Naive thymus-derived CD4-positive, alpha-beta T cell (primary cell): ENCODE measurements at regions of chr14 and their contacts with region 1.

Region 1: DNA sequence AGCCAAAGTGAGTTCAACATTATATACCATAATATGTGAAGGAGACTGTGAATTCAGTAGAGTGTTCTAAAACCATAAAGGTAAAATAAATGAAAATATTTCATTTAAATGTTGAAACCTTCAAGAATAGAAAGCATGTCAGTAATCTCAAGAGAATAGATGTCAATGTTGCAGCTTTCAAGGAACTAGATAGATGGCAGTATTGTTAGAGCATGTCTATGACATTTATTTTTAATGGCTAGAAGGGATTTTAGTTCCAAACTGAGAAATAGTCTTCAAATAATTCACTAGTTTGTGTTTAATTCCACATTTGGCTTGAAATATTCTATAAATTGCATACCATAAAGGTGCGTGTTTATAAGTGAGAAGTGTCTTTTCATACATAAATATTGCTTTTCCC is 326.5 kb downstream of the FLRT2 start:
- DNase-seq: no peak
- ATAC-seq: no peak
- H3K4me3 ChIP-seq: no peak overlapping the region
- H3K4me3 Mint-ChIP-seq: no peak overlapping the region
- H3K27ac ChIP-seq: no peak overlapping the region
- H3K27ac Mint-ChIP-seq: no peak overlapping the region
- H3K4me1 ChIP-seq: no peaks in the 10 kb centered on the region
- H3K4me1 Mint-ChIP-seq: peaks cover 0 to 5% (median 0%) of the 10 kb centered on the region in 7 donors
- H3K27me3 ChIP-seq: no peaks in the 10 kb centered on the region
- H3K27me3 Mint-ChIP-seq: peaks cover 0 to 13% (median 8%) of the 10 kb centered on the region in 5 donors

Region 2: DNA sequence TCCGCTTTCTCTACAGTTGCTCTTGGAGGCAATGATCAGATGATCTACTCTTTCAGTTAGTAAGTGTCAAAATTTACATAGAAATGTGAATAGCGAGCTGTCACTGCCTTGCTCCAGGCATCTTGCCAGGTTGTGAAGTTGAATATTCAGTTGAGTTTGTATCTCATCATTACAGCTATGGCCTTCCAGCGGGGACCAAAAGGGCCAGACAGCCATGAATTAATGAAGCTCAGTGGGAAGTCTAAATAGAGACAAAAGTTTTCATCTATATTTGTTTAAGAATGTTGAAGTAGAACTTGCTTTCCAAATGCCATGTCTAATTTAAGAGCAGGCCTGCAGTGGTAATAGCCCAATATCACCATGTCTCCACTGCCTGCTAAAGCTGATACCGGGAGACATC is 61.3 kb after region 1 on chr14:
- CTCF ChIA-PET with region 1: no interaction called
- POLR2A ChIA-PET with region 1: no interaction called
- intact Hi-C with region 1: no loop called
- DNase-seq: no peak
- ATAC-seq: no peak
- H3K4me3 ChIP-seq: no peak overlapping the region
- H3K4me3 Mint-ChIP-seq: no peak overlapping the region
- H3K27ac ChIP-seq: no peak overlapping the region
- H3K27ac Mint-ChIP-seq: no peak overlapping the region
- H3K4me1 ChIP-seq: no peaks in the 10 kb centered on the region
- H3K4me1 Mint-ChIP-seq: peaks cover 0 to 2% (median 0%) of the 10 kb centered on the region in 7 donors
- H3K27me3 ChIP-seq: no peaks in the 10 kb centered on the region
- H3K27me3 Mint-ChIP-seq: peaks cover 0 to 12% (median 4%) of the 10 kb centered on the region in 5 donors

Region 3: GRCh38 chr14:85974602-85975001 is 118.2 kb after region 1 on chr14:
- CTCF ChIA-PET with region 1: no interaction called
- POLR2A ChIA-PET with region 1: no interaction called
- intact Hi-C with region 1: no loop called
- DNase-seq: no peak
- ATAC-seq: no peak
- H3K4me3 ChIP-seq: no peak overlapping the region
- H3K4me3 Mint-ChIP-seq: no peak overlapping the region
- H3K27ac ChIP-seq: no peak overlapping the region
- H3K27ac Mint-ChIP-seq: no peak overlapping the region
- H3K4me1 ChIP-seq: no peaks in the 10 kb centered on the region
- H3K4me1 Mint-ChIP-seq: peaks cover 0 to 17% (median 9%) of the 10 kb centered on the region in 7 donors
- H3K27me3 ChIP-seq: no peaks in the 10 kb centered on the region
- H3K27me3 Mint-ChIP-seq: no peaks in the 10 kb centered on the region

Region 4: DNA sequence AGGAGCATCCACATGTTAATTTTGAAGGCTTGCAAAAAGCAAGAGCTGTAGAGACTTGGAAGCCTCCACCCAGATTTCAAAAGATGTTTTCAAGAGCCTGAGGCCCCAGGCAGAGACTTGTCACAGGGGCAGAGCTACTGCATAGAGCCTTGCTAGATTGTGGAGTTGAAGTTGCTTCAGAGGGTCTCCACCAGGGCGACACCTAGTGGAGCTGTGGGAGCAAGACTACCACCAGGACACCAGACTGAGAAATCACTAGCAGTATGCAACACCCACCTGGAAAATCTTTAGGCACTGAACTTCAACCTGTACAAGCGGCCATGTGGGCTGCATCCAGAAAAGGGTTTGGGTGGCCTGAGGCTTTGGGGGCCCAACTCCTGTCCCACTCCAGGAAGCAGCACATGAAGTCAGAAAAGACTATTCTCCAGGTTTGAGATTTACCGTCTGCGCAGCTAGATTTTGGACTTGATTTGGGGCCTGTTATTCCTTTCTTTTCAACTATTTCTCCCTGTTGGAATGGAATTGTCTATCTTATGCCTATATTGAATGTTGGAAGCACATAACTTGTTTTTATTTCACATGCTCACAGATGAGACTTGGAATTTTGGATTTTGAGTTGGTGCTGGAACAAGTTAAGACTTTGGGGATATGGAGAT is 182.1 kb after region 1 on chr14:
- CTCF ChIA-PET with region 1: no interaction called
- POLR2A ChIA-PET with region 1: no interaction called
- intact Hi-C with region 1: loop called in 1 of 2 experiments (anchors 1 kb)
- DNase-seq: peak in 6 of 9 donors; percentile 9 to 28 (median 16)
- ATAC-seq: peak; percentile 73
- H3K4me3 ChIP-seq: no peak overlapping the region
- H3K4me3 Mint-ChIP-seq: no peak overlapping the region
- H3K27ac ChIP-seq: no peak overlapping the region
- H3K27ac Mint-ChIP-seq: no peak overlapping the region
- H3K4me1 ChIP-seq: no peaks in the 10 kb centered on the region
- H3K4me1 Mint-ChIP-seq: no peaks in the 10 kb centered on the region
- H3K27me3 ChIP-seq: no peaks in the 10 kb centered on the region
- H3K27me3 Mint-ChIP-seq: no peaks in the 10 kb centered on the region

Region 5: DNA sequence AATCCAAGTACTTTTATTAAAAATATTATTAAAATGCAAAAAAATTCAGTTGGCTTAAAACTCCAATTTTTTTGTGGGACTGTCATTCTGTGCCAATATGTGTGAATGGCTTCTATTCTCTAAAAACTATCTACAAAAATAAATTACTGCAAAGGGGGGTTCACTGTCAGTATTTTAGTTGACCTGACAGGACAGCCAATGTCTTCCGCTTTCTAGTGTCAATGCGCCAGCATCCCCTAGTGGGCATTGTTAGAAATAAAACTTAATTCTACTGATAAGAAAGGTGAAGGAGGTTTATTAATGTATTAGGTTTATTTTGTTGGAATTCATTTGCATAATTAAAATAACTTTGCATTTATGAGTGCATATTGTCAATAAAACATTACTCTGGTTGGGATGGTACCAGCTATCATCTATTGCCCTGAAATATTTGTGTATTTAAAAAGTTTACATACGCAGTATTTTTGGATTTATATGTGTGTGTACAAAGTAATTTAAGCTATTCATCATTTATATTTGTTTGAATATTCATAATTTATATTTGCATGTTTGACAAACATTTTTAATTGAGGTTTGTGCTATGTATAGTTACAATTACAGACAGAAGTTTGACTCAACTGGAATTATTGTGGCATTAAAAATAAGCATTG is 200.7 kb after region 1 on chr14:
- CTCF ChIA-PET with region 1: no interaction called
- POLR2A ChIA-PET with region 1: no interaction called
- intact Hi-C with region 1: loop called (anchors 5 kb)
- DNase-seq: peak in 4 of 9 donors; percentile 14 to 30 (median 20)
- ATAC-seq: no peak
- H3K4me3 ChIP-seq: no peak overlapping the region
- H3K4me3 Mint-ChIP-seq: no peak overlapping the region
- H3K27ac ChIP-seq: no peak overlapping the region
- H3K27ac Mint-ChIP-seq: no peak overlapping the region
- H3K4me1 ChIP-seq: no peaks in the 10 kb centered on the region
- H3K4me1 Mint-ChIP-seq: peaks cover 0 to 14% (median 6%) of the 10 kb centered on the region in 7 donors
- H3K27me3 ChIP-seq: no peaks in the 10 kb centered on the region
- H3K27me3 Mint-ChIP-seq: no peaks in the 10 kb centered on the region